Esophagus muscularis mucosa (tissue), 4 donors: ENCODE measurements at regions of chr17 and their contacts with region 1.

Region 1: DNA sequence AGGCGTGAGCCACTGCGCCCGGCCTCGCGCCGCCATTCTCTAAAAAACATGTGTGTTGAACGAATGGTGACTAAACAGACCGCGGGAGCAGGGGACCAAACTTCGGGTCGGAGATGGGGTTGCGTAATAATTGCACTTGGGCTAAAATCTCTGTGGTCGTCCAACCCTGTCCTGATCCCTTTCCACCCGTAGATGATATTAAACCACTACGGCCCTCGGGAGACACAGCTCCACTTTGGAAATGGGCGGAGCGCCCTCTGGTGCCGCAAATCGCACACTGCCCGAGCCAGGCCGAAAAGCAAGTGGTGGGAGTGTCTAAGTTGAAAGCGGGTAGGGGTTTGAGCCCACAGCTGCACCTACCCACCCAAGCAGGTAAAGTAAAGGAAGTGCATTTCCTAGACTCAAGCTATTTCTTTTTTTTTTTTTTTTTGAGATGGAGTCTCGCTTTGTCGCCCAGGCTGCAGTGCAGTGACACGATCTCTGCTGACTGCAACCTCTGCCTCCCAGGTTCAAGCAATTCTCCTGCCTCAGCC is 17.0 kb downstream of the CAVIN1 start:
- DNase-seq: peak; percentile 96
- H3K4me3 ChIP-seq: peak overlapping the region in 2 of 4 donors; percentile 1 to 17
- H3K27ac ChIP-seq: peak overlapping the region; percentile 97 to 100 (median 100)
- H3K4me1 ChIP-seq: peaks cover 89 to 98% (median 97%) of the 10 kb centered on the region in 4 donors
- H3K27me3 ChIP-seq: no peaks in the 10 kb centered on the region
- CTCF ChIP-seq: peak; percentile 88 to 91 (median 88)
- EP300 ChIP-seq: no peak
- POLR2A ChIP-seq: no peak

Region 2: DNA sequence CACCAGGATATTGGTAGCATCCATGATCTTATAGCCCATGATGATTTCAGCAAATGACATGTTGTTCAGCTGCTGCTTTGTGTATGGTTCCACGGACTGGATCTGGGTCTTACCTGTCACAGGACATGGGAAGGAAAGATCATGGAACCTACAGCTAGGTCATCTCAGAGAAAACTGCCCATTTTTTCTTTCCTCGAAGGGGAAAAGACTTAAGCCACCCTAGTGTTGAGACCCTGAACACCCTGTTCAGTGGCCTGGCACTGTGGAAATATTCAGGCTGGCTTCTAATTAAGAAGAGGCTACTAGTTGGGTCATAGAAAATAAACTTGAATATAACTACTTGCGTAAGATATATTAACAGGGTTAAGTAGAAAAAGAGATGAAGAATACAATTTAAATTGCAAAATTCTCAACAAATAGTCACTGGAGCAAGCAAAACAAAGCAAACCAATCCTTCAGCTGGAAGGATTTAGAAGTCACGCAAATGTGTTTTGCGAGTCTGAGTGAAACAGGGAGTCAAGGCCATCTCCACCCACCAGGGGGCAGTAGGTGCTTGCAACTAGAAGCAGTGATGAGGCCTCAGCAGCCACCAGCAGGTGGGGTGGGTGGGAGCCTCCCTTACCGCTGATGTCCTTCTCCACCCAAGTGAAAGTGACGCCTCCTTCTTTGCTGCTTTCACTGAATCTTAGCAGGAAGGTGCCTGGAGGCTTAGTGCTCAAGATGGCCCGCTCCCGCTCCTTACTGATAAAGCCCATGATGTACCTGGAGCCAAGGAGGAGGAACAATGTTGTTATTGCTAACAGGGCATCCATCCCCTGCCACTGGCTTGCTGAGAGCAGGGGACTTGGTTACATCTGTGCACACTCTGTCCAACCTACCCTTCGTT is 83.4 kb before region 1 on chr17:
- intact Hi-C with region 1: loop called (anchors 1 kb)
- DNase-seq: peak; percentile 99
- H3K4me3 ChIP-seq: no peak overlapping the region
- H3K27ac ChIP-seq: peak overlapping the region; percentile 29 to 62 (median 55)
- H3K4me1 ChIP-seq: peaks cover 19 to 44% (median 26%) of the 10 kb centered on the region in 4 donors
- H3K27me3 ChIP-seq: no peaks in the 10 kb centered on the region
- CTCF ChIP-seq: peak; percentile 98 to 100 (median 99)
- EP300 ChIP-seq: no peak
- POLR2A ChIP-seq: no peak